ENCODE measurements at regions of chr12 and their contacts with region 1.

Region 1: GRCh38 chr12:66288121-66288520 is 14.2 kb upstream of the HELB start:
- DNase-seq: no peak

Region 2: DNA sequence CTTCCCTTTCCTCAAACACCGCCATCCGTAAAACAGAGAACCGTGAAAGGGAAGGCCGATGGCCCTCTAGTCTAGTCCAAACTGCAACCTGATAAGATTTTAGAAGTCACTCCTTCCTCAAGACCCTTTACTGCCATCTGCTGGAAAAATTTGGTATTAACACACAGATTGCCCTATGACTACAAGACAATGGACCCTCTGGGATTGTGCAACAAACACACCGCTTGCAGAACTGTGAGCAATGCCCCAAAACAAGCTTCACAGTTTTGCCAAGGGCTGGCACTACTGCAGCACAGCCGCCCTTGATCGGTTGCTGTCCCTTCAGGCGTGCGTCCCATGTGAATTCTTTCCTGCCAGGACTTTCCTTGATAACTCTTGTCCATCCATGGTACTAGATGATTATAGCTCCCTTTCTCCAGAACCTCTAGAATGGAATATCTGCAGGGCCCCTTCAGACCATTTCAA is 180.6 kb before region 1 on chr12:
- CTCF ChIA-PET with region 1: no interaction called
- POLR2A ChIA-PET with region 1: no interaction called
- DNase-seq: peak; percentile 74

Region 3: GRCh38 chr12:66301944-66302826 is 14.1 kb after region 1 on chr12 and contains the start of gene HELB:
- CTCF ChIA-PET with region 1: interaction called, 4 read pairs
- POLR2A ChIA-PET with region 1: interaction called, 11 read pairs
- DNase-seq: peak; percentile 95